ENCODE measurements at regions of chr1 and their contacts with region 1.

Region 1: DNA sequence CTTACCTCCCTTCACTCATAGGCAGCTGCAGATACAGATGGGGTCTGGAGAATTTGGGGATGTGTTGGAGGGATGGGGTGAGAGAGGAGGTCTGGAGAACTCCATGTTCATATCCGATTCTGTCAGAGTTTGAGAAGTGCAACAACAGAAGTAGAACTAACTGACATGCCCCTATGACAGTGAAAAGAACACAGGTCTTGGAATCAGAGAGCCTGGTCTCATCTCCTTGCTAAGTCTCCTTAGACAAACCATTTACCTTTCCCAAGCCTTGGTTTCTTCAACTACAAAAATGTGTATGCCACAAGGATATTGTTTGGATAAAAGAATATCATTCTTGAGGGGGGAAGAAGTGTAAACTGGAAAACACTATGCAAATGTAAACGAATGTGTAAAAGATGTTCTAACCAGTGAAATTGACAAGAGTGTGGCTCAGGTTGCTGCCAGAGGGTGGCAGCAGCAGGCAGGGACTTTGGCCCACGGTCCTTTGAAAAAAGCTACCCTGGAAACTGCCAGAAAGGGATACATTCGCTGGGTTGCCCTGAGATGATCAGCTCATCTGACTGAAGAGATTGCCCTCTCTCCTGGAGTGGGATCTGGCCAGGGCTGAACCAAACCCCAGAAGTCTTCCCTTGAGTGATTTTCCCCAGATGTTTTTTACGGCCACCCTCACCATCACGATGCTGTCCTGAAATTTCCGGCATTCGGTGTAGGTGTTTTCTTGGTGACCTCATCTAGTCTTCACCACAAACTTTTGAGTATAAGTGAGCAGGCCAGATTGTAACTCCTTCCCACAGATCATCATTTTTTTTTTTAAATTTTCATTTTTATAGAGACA is 17.0 kb upstream of the CD2 start:
- DNase-seq: peak; percentile 31 to 68
- H3K4me3 ChIP-seq: no peak overlapping the region
- H3K27ac ChIP-seq: no peak overlapping the region
- H3K4me1 ChIP-seq: no peaks in the 10 kb centered on the region
- H3K27me3 ChIP-seq: peaks cover 0 to 2% (median 0%) of the 10 kb centered on the region in 4 experiments; a peak in 1 of 7 replicates
- CTCF ChIP-seq: peak; percentile 85 to 90 (median 89)
- EP300 ChIP-seq: no peak
- POLR2A ChIP-seq: no peak
- RAD21 ChIP-seq: peak; percentile 97

Region 2: GRCh38 chr1:116724765-116725375 is 12.4 kb before region 1 on chr1:
- CTCF ChIA-PET with region 1: interaction called, 62 read pairs
- POLR2A ChIA-PET with region 1: no interaction called
- DNase-seq: peak in 1 of 2 experiments; percentile 72
- H3K4me3 ChIP-seq: no peak overlapping the region
- H3K27ac ChIP-seq: no peak overlapping the region
- H3K4me1 ChIP-seq: no peaks in the 10 kb centered on the region
- H3K27me3 ChIP-seq: no peaks in the 10 kb centered on the region
- CTCF ChIP-seq: peak in 2 of 3 experiments; percentile 34 to 63; a peak in 2 of 4 replicates
- EP300 ChIP-seq: no peak
- POLR2A ChIP-seq: no peak
- RAD21 ChIP-seq: peak; percentile 59 to 61

Region 3: GRCh38 chr1:116748272-116748671 is 11.0 kb after region 1 on chr1:
- CTCF ChIA-PET with region 1: interaction called, 32 read pairs
- POLR2A ChIA-PET with region 1: no interaction called
- DNase-seq: no peak
- H3K4me3 ChIP-seq: no peak overlapping the region
- H3K27ac ChIP-seq: no peak overlapping the region
- H3K4me1 ChIP-seq: no peaks in the 10 kb centered on the region
- H3K27me3 ChIP-seq: no peaks in the 10 kb centered on the region
- CTCF ChIP-seq: no peak
- EP300 ChIP-seq: no peak
- POLR2A ChIP-seq: no peak
- RAD21 ChIP-seq: no peak

Region 4: GRCh38 chr1:116817582-116818064 is 80.4 kb after region 1 on chr1:
- CTCF ChIA-PET with region 1: interaction called, 14 read pairs
- POLR2A ChIA-PET with region 1: no interaction called
- DNase-seq: peak; percentile 41 to 68
- H3K4me3 ChIP-seq: no peak overlapping the region
- H3K27ac ChIP-seq: no peak overlapping the region
- H3K4me1 ChIP-seq: no peaks in the 10 kb centered on the region
- H3K27me3 ChIP-seq: no peaks in the 10 kb centered on the region
- CTCF ChIP-seq: peak; percentile 59 to 97 (median 73)
- EP300 ChIP-seq: no peak
- POLR2A ChIP-seq: no peak
- RAD21 ChIP-seq: peak; percentile 63 to 75

Region 5: GRCh38 chr1:116873680-116874271 is 136.5 kb after region 1 on chr1:
- CTCF ChIA-PET with region 1: interaction called, 79 read pairs
- POLR2A ChIA-PET with region 1: no interaction called
- DNase-seq: no peak
- H3K4me3 ChIP-seq: no peak overlapping the region
- H3K27ac ChIP-seq: no peak overlapping the region
- H3K4me1 ChIP-seq: peaks cover 2 to 14% (median 12%) of the 10 kb centered on the region in 4 experiments
- H3K27me3 ChIP-seq: no peaks in the 10 kb centered on the region
- CTCF ChIP-seq: no peak
- EP300 ChIP-seq: no peak
- POLR2A ChIP-seq: no peak
- RAD21 ChIP-seq: no peak

Region 6: GRCh38 chr1:117059678-117060440 is 322.6 kb after region 1 on chr1 and contains the start of gene TTF2:
- CTCF ChIA-PET with region 1: interaction called, 10 read pairs
- POLR2A ChIA-PET with region 1: interaction called, 4 read pairs
- DNase-seq: peak; percentile 93 to 98
- H3K4me3 ChIP-seq: peak within 1 kb of the TSS; percentile 77 to 96 (median 90)
- H3K27ac ChIP-seq: peak within 1 kb of the TSS; percentile 92
- H3K4me1 ChIP-seq: peaks cover 0 to 3% (median 1%) of the 10 kb centered on the region in 4 experiments; a peak in 1 of 7 replicates
- H3K27me3 ChIP-seq: no peaks in the 10 kb centered on the region
- CTCF ChIP-seq: peak in 1 of 3 experiments; percentile 30; a peak in 2 of 4 replicates
- EP300 ChIP-seq: no peak
- POLR2A ChIP-seq: peak; percentile 80 to 89
- RAD21 ChIP-seq: 0 out of 4 replicates have a peak, but pooled peaks of 1 of the 2 experiments have one; percentile 14
- total RNA-seq, gene TTF2: 89.6 and 93.2 TPM in 2 replicates